ENCODE measurements at regions of chr7 and their contacts with region 1.

Region 1: GRCh38 chr7:50696810-50697582 is 85.7 kb downstream of the GRB10 start:
- DNase-seq: no peak
- ATAC-seq: peak; percentile 75; the same call in 1 of the 2 replicates
- H3K4me3 ChIP-seq: no peak overlapping the region
- H3K27ac ChIP-seq: no peak overlapping the region
- H3K4me1 ChIP-seq: no peaks in the 10 kb centered on the region
- H3K27me3 ChIP-seq: no peaks in the 10 kb centered on the region
- CTCF ChIP-seq: peak; percentile 71

Region 2: DNA sequence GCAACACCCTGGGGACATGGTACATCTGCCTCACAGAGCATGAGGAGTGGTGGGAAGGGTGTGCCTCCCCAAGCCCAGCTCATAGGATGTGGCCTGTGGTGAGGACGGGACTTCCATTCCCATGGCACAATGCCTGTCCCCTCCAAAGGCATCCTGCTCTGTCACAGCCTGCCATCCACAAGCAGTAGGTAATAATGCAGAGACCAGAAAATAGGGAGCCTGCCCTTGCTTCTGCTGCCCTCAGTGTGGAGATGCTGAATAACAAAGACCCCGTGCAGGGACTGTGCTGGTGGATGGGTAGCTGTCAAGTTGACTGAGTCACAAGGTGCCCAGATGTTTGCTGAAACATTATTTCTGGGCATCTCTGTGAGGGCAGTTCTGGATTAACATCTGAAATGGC is 285.6 kb after region 1 on chr7:
- CTCF ChIA-PET with region 1: no interaction called
- POLR2A ChIA-PET with region 1: no interaction called
- in situ Hi-C with region 1: no loop called
- intact Hi-C with region 1: no loop called
- DNase-seq: no peak
- ATAC-seq: no peak
- H3K4me3 ChIP-seq: no peak overlapping the region
- H3K27ac ChIP-seq: no peak overlapping the region
- H3K4me1 ChIP-seq: no peaks in the 10 kb centered on the region
- H3K27me3 ChIP-seq: peaks cover 5% of the 10 kb centered on the region
- CTCF ChIP-seq: peak; percentile 12; the same call in 1 of the 2 replicates

Region 3: GRCh38 chr7:51141451-51142003 is 444.5 kb after region 1 on chr7:
- CTCF ChIA-PET with region 1: no interaction called
- POLR2A ChIA-PET with region 1: no interaction called
- in situ Hi-C with region 1: no loop called
- intact Hi-C with region 1: loop called (anchors 1 kb)
- DNase-seq: peak; percentile 51
- ATAC-seq: no peak; the same call in 1 of the 2 replicates
- H3K4me3 ChIP-seq: no peak overlapping the region
- H3K27ac ChIP-seq: no peak overlapping the region
- H3K4me1 ChIP-seq: no peaks in the 10 kb centered on the region
- H3K27me3 ChIP-seq: peaks cover 2% of the 10 kb centered on the region; the same call in 1 of the 2 replicates
- CTCF ChIP-seq: peak; percentile 73

Measured in Panc1 (cell line).